HCT116 (cell line): ENCODE measurements at regions of chr5 and their contacts with region 1.

Region 1: DNA sequence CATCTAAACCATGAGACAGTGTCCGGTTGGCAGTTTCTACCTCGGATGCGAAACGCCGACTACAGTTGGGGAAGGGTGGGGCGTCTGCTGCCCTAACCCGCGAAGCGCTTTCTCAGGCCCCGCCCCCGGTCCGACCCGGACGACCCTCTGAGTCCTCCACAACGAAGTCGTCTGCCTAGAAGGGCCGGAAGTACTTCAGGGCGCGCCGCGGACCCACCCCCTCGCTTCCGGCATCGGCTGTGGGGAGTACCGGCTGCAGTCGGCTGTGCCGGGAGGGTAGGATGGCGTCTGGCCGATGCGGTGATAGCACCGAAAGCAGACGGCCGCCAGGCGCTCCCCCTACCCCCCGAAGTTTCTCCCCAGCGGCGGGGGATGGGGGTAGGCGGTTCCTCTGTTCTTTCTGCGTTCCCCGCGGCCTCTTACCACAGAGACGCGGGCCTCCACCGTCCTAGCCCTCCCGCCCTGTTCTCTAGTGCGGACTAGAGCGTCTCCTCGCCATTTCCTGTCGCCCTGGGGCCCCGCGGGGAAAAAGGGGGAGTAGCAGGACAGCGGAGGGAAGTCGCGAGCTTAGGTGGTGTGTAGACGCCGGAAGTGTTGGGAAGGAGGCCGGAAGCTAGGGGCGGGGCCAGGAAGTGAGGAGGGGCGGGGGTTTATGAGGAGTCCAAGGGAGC is at the start of gene TRIM41:
- DNase-seq: peak; percentile 96
- ATAC-seq: peak; percentile 68
- H3K4me3 ChIP-seq: peak within 1 kb of the TSS; percentile 94 to 100
- H3K27ac ChIP-seq: peak within 1 kb of the TSS; percentile 92
- H3K4me1 ChIP-seq: peaks cover 22 to 43% of the 10 kb centered on the region in 2 experiments
- H3K27me3 ChIP-seq: no peaks in the 10 kb centered on the region
- CTCF ChIP-seq: 0 out of 6 replicates have a peak, but pooled peaks of 1 of the 3 experiments have one; percentile 8
- POLR2A ChIP-seq: peak; percentile 52
- RAD21 ChIP-seq: no peak
- total RNA-seq, gene TRIM41: 51.8 TPM

Region 2: DNA sequence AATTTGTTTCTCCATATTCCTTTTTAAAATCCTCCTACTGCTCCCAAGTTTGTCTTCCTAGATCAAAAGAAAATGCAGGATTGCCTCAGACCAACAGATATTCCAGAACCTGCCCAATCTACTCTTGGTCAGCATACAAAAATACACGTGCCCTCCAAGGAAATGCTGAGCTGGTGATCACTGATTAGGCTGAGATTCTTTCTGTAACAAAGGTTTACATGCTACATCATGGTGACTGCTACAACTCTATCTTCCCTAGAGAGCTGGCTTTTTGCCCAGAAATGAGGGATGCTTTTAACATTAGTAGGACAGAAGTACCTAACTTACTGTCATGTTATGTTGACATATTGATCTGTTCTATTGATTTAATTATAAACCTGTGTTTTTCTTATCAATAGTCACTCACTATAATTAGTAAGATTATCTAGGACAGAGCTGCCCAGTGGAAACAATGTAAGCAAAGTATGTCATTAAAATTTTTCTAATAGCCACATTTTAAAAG is 518.8 kb before region 1 on chr5:
- CTCF ChIA-PET with region 1: no interaction called
- POLR2A ChIA-PET with region 1: no interaction called
- RAD21 ChIA-PET with region 1: no interaction called
- intact Hi-C with region 1: no loop called
- DNase-seq: peak; percentile 8
- ATAC-seq: no peak
- H3K4me3 ChIP-seq: no peak overlapping the region
- H3K27ac ChIP-seq: no peak overlapping the region
- H3K4me1 ChIP-seq: 0 out of 4 replicates have a peak, but pooled peaks cover 2 to 5% of the 10 kb centered on the region in 2 experiments
- H3K27me3 ChIP-seq: no peaks in the 10 kb centered on the region
- CTCF ChIP-seq: no peak
- POLR2A ChIP-seq: no peak
- RAD21 ChIP-seq: no peak

Region 3: GRCh38 chr5:181173420-181174342 is 49.5 kb before region 1 on chr5:
- CTCF ChIA-PET with region 1: no interaction called
- POLR2A ChIA-PET with region 1: interaction called, 6 read pairs
- RAD21 ChIA-PET with region 1: no interaction called
- intact Hi-C with region 1: loop called (anchors 5 kb)
- DNase-seq: peak; percentile 86
- ATAC-seq: peak; percentile 72
- H3K4me3 ChIP-seq: peak overlapping the region; percentile 39 to 58
- H3K27ac ChIP-seq: peak overlapping the region; percentile 71
- H3K4me1 ChIP-seq: peaks cover 13 to 53% of the 10 kb centered on the region in 2 experiments; a peak in 3 of 4 replicates
- H3K27me3 ChIP-seq: no peaks in the 10 kb centered on the region
- CTCF ChIP-seq: peak in 1 of 3 experiments; percentile 3; a peak in 1 of 6 replicates
- POLR2A ChIP-seq: peak; percentile 15
- RAD21 ChIP-seq: no peak

Region 4: DNA sequence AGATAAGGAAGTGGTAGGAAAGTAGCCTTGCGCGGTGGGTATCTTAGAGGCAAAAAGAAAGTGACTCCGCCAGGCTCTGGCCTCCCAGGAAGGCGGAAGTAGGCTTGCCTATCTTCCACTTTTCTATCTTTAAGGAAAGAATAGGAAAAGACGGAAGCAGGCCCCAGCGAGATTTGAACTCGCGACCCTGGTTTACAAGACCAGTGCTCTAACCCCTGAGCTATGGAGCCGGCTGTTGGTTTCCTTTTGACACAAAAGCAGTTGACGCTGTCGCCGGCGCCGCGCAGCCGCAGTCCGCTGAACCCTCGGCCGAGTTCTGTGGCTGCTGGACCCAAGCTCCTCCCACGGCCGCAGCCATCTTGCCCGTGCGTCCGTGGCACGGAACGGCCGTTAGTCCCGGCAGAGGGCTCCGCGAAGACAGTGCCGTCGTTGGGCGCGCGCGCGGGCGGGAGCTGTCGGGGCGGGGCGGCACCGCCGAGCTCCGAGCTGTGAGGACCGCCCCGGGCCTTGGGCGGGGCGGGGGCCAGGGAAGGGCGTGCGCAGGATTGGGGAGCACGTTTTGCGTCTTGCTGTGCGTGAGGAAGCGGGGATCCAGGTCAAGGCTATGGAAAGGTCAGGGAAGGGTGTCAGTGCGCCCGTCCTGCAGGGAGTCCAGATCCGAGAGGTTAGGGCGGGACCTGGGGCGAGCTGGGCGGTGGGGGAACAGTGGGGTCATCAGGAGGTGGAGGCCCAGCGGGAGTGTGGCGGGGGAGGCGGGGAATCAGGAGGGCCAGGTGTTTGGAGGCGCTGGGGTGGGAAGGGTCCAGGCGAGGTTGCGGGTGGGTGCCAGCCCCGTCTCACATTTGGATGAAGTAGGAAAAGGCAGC is 31.4 kb before region 1 on chr5:
- CTCF ChIA-PET with region 1: interaction called, 3 read pairs
- POLR2A ChIA-PET with region 1: interaction called, 3 read pairs
- RAD21 ChIA-PET with region 1: no interaction called
- intact Hi-C with region 1: loop called (anchors 1 kb)
- DNase-seq: peak; percentile 89
- ATAC-seq: peak; percentile 68
- H3K4me3 ChIP-seq: peak overlapping the region; percentile 74 to 92
- H3K27ac ChIP-seq: peak overlapping the region; percentile 76
- H3K4me1 ChIP-seq: peaks cover 18 to 48% of the 10 kb centered on the region in 2 experiments
- H3K27me3 ChIP-seq: no peaks in the 10 kb centered on the region
- CTCF ChIP-seq: no peak
- POLR2A ChIP-seq: no peak
- RAD21 ChIP-seq: no peak

Region 5: GRCh38 chr5:181207214-181208107 is 15.7 kb before region 1 on chr5:
- CTCF ChIA-PET with region 1: no interaction called
- POLR2A ChIA-PET with region 1: interaction called, 22 read pairs
- RAD21 ChIA-PET with region 1: no interaction called
- intact Hi-C with region 1: loop called (anchors 1 kb)
- DNase-seq: peak; percentile 86
- ATAC-seq: peak; percentile 48
- H3K4me3 ChIP-seq: peak overlapping the region; percentile 30 to 50
- H3K27ac ChIP-seq: peak overlapping the region; percentile 93
- H3K4me1 ChIP-seq: peaks cover 27 to 60% of the 10 kb centered on the region in 2 experiments
- H3K27me3 ChIP-seq: no peaks in the 10 kb centered on the region
- CTCF ChIP-seq: no peak
- POLR2A ChIP-seq: no peak
- RAD21 ChIP-seq: no peak

Region 6: DNA sequence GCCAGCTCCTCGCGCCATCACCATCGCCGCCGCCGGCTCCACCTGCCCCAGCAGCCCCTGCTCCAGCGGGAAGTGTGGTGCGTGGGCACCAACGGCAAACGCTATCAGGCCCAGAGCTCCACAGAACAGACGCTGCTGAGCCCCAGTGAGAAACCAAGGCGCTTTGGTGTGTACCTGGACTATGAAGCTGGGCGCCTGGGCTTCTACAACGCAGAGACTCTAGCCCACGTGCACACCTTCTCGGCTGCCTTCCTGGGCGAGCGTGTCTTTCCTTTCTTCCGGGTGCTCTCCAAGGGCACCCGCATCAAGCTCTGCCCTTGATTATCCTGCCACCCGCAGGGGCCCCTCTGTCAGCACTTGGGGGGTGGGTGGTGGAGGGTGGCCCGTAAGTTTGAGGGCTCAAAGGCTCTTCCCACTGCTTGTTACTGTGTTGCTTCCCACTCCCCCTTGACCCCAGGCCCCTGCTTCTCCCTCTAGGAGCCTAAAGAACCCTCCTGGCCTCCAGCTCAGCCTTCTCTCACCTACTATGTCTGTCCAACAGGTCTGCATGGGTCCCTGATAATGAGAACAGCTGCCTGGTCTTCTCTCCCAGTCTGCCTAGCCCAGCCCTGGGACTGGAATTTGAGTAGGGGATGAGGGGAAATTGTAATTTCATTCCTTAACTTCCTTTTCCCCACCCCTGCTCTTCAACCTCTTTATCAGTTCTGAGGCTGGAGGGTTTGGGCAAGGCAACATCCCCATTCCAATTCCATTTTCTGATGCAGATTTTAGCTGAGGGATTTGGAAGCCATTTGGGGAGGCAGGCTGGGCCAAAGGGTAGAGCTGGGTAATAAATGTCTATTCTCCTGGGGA is 11.5 kb after region 1 on chr5:
- CTCF ChIA-PET with region 1: no interaction called
- POLR2A ChIA-PET with region 1: interaction called, 11 read pairs
- RAD21 ChIA-PET with region 1: no interaction called
- intact Hi-C with region 1: no loop called
- DNase-seq: no peak
- ATAC-seq: peak; percentile 32
- H3K4me3 ChIP-seq: no peak overlapping the region
- H3K27ac ChIP-seq: peak overlapping the region; percentile 34; the same call in 1 of the 2 replicates
- H3K4me1 ChIP-seq: no peaks in the 10 kb centered on the region
- H3K27me3 ChIP-seq: no peaks in the 10 kb centered on the region
- CTCF ChIP-seq: no peak
- POLR2A ChIP-seq: no peak
- RAD21 ChIP-seq: no peak

Region 7: GRCh38 chr5:181243512-181244343 is 20.5 kb after region 1 on chr5 and contains the start of gene RACK1:
- CTCF ChIA-PET with region 1: no interaction called
- POLR2A ChIA-PET with region 1: interaction called, 19 read pairs
- RAD21 ChIA-PET with region 1: no interaction called
- intact Hi-C with region 1: loop called (anchors 1 kb)
- DNase-seq: peak; percentile 81
- ATAC-seq: peak; percentile 66
- H3K4me3 ChIP-seq: peak within 1 kb of the TSS; percentile 88 to 92
- H3K27ac ChIP-seq: peak within 1 kb of the TSS; percentile 96
- H3K4me1 ChIP-seq: peaks cover 24 to 46% of the 10 kb centered on the region in 2 experiments
- H3K27me3 ChIP-seq: no peaks in the 10 kb centered on the region
- CTCF ChIP-seq: no peak
- POLR2A ChIP-seq: peak; percentile 77
- RAD21 ChIP-seq: no peak
- total RNA-seq, gene RACK1: 2,432 TPM